ENCODE measurements at regions of chr6 and their contacts with region 1.

Region 1: DNA sequence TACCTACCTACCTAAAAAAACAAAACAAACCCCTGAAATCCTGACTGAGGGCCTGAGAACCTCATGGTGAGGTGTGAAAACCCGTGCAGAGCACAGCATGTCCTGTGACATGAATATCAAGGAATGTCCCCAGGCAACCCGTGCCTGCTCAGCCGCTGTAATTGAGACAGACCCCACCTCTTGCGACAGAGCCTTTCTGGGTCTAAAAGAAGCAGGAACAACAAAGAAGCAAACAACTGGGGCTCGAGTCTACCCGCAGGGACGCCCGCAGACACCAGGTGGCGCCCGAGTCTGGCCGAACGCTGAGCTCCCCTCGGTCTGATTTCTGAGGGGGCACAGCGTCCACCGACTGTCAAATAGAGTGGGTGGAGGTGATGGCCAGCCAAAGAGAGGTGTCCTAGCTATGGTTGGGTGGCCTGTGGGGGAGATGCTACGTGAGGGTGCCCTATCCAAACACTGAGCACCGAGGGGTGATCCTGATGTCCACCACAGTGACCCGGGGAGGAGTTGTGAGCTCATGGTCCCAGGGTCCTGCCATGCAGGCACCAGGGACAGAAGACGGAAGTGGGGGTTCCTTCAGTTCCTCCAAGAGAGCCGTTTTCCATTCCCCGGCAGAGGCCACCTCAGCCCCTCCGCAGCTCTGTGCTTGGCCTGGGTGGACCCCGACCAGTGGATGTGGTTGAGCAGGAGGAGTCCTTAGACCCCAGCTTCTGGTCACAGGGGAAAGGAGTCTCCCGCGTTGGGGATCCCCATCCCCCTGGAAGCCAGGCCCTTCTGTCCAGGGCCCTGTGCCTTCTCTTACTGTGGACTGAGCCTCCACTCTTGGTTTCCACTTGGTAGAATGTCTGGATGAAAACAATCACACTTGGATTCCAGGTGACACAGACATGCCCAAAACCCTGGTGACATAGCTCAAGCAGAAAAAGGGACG is 268.2 kb downstream of the CDC5L start:
- DNase-seq: peak; percentile 89 to 97
- H3K4me3 ChIP-seq: no peak overlapping the region
- CTCF ChIP-seq: peak in 1 of 3 donors; percentile 95
- POLR2A ChIP-seq: no peak

Region 2: DNA sequence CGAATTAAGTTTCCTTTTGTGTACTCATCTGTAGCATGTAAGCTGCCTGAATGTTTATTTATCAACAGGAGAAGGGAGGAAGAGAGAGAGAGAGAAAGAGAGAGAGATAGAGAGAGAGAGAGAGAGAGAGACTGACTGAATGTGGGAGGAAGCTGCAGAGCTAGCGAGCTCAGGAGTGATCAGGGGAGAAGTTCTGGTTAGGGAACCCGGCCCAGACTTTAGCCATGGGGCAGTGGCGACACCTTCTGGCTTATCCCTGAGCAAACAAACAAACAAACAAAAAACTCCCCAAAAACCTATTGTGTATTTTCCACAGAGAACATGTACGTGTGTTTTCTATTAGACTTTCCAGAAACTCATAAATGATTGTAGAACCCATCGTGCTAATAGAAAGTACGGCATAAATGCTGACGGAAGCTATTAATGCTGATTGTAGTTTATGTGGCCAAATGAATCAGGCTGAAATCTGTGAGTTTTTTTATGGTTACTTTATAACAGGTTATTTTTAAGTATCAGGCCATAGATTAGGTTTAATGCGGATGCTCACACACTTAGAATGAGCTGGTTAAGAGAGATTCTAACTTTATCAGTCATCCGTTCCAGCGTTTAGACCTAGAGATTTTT is 1267.2 kb after region 1 on chr6:
- intact Hi-C with region 1: loop called (anchors 10 kb)
- DNase-seq: peak; percentile 66 to 92
- H3K4me3 ChIP-seq: no peak overlapping the region
- CTCF ChIP-seq: peak in 1 of 3 donors; percentile 74
- POLR2A ChIP-seq: no peak